GM10248 (cell line): ENCODE measurements at regions of chr9 and their contacts with region 1.

Region 1: DNA sequence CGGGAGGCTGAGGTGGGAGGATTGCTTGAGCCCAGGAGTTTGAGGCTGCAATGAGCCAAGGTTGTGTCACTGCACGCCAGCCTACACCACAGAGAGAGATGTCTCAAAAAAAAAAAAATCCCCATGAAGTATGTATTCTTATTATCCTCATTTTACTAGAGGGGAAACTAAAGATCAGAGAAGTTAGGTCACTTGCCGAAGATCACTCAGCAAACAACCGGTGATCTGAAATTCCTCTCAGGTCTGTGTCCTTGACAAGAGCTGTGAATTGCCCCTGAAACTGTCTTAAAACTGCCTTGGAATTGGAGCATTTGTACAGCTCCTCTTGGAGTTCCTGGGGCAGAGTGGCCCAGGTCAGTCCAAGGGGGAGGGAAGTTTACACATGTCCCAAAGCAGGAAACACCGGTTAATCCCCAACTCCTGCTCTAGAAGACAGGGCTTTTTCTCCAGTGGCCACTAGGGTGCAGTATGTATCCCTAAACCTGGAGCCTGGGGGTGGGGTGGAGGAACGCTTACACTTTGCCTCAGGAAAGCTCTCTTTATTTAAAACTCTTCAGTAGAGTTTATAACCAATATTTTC is 27.6 kb downstream of the AQP7 start:
- DNase-seq: peak; percentile 73
- CTCF ChIP-seq: peak; percentile 73

Region 2: DNA sequence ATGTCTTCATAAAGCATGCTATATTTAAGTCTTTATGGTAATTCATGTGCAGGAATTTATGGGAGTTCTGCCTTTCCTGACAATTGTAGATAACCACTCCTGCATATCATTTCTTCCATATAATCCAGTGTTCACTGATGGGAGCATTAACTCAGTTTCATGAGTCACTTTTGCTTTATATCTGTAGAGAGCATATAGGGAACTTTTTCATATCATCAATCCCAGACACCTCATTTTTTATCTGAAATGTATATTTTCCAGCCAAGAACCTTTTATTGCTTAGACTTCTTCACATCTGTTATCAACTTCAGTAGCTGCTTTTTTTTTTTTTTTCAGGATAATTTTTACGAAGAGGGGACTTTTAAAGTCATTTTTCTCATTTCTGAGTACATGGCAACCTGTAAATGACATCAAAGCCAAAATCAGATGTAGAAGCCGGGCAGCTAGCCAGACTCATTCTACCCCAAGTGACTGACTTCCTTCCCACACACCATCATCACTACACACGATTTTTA is 43.3 kb before region 1 on chr9:
- CTCF ChIA-PET with region 1: interaction called, 11 read pairs
- POLR2A ChIA-PET with region 1: interaction called, 3 read pairs
- DNase-seq: no peak
- CTCF ChIP-seq: no peak

Region 3: GRCh38 chr9:33393581-33393980 is 18.9 kb after region 1 on chr9:
- CTCF ChIA-PET with region 1: interaction called, 16 read pairs
- POLR2A ChIA-PET with region 1: no interaction called
- DNase-seq: no peak
- CTCF ChIP-seq: no peak

Region 4: GRCh38 chr9:33415501-33416038 is 40.8 kb after region 1 on chr9:
- CTCF ChIA-PET with region 1: interaction called, 17 read pairs
- POLR2A ChIA-PET with region 1: no interaction called
- DNase-seq: peak; percentile 84
- CTCF ChIP-seq: peak; percentile 69

Region 5: DNA sequence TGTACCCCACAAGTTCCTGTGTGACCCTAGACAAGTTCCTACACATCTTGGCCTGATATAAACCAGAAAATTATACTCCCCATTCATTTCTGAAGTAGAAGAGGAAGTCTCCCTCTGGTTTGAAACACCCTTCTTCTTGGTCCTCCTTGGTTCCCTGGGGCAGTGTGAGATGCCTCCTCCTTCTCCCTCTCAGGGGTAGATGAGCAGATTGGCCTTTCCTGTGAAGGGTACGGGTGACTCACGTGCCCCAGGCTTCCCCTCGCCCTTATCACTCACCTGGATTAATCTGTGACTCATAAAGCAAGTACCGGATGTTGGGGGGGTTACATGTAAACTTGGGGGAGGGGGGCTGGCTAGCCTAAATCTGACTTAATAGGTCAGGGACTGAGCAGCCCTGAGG is 83.7 kb after region 1 on chr9:
- CTCF ChIA-PET with region 1: interaction called, 28 read pairs
- POLR2A ChIA-PET with region 1: no interaction called
- DNase-seq: peak; percentile 61
- CTCF ChIP-seq: no peak

Region 6: GRCh38 chr9:33473643-33474352 is 99.1 kb after region 1 on chr9 and contains the start of gene NOL6:
- CTCF ChIA-PET with region 1: interaction called, 10 read pairs
- POLR2A ChIA-PET with region 1: interaction called, 4 read pairs
- DNase-seq: peak; percentile 98
- CTCF ChIP-seq: no peak